Upper lobe of right lung (tissue), 1 donor: ENCODE measurements at regions of chr5 and their contacts with region 1.

Region 1: DNA sequence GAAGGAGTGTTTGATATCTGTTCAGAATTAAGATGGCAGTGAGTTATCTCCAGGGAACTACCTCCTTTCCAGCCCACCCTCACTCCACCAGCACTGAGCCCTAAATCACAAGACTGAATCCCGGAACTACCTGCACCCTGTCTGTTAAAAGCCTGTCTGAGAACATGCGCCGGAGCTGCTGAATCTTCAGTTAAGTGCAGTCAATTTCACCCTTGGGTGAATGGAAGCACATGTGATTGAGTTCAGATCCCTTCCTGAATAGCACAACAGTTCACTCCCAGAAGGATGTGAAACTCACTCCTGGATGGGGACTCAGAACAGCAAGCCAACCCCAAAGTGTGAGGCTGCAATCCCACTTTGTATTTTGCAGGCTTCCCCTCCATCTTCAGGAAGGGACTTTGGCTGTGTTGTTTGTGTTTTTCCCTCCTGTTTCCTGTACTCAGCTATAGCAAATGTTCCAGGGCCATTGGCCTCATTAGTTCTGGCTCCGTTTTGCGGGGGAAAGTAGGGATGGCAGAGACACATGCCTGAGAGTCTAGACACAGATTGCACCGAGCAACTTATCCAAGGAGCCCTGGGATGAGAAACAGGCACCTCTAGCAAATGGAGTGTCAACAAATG is 43.4 kb downstream of the DPYSL3 start:
- DNase-seq: no peak
- ATAC-seq: no peak
- H3K4me3 ChIP-seq: no peak overlapping the region
- H3K27ac ChIP-seq: no peak overlapping the region
- H3K4me1 ChIP-seq: no peaks in the 10 kb centered on the region
- H3K27me3 ChIP-seq: no peaks in the 10 kb centered on the region
- CTCF ChIP-seq: no peak

Region 2: DNA sequence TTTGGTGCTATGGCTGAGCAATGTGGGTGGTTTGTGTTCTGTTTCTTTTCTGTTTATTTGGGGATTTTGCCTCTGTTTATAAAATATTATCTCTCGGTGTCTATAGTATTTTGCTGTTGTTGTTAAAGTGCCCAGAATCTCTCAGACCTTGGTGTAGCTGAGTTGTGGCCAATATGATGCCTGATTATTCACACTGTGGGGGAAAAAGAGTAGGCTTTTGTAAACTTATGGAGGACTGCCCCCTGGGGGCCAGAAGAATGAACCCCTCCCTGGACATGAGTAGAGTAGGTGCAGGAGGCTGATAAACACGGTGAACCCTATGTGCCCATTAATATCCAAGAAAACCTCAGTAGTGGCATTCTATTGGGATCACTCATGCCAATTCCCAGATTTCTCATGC is 92.4 kb after region 1 on chr5:
- intact Hi-C with region 1: loop called (anchors 5 kb)
- DNase-seq: no peak
- ATAC-seq: peak; percentile 83
- H3K4me3 ChIP-seq: no peak overlapping the region
- H3K27ac ChIP-seq: no peak overlapping the region
- H3K4me1 ChIP-seq: peaks cover 15% of the 10 kb centered on the region
- H3K27me3 ChIP-seq: no peaks in the 10 kb centered on the region
- CTCF ChIP-seq: peak; percentile 63